ENCODE measurements at regions of chr9 and their contacts with region 1.

Region 1: GRCh38 chr9:35675732-35676392 is 2.1 kb downstream of the CA9 start:
- DNase-seq: no peak
- H3K4me3 ChIP-seq: peak overlapping the region; percentile 39
- CTCF ChIP-seq: no peak

Region 2: DNA sequence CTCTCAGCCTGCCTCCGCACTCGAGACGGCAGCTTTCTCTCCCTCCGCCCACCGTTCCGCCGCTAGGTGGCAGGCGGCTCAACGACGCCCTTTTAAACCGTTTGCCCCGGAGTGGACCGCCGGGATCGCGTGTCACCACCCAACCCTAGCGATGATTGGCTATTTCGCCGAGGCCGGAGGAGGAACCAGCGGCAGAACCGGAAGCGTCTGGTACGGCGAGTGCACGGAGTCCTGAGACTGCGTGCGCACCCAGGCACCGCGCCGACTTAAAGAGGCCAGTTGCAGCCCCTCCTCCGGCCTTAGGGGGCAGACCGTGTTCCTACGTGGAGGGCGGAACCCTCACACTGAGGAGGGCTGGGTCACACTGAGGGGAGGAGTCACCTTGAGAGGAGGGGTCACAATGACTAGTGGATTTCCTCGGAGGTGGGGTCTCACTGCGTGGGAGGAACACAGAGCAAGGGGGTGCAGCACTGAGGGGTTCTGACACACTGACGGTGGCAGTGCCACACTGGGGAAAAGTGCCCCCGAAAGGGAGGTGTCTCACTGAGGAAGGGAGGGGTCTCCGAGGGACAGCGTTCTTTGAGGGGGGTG is 71.8 kb before region 1 on chr9:
- in situ Hi-C with region 1: loop called (anchors 10 kb)
- DNase-seq: peak; percentile 99
- H3K4me3 ChIP-seq: peak overlapping the region; percentile 64
- CTCF ChIP-seq: peak; percentile 94

Region 3: GRCh38 chr9:35711501-35712428 is 35.9 kb after region 1 on chr9:
- in situ Hi-C with region 1: loop called (anchors 5 kb)
- DNase-seq: no peak
- H3K4me3 ChIP-seq: no peak overlapping the region
- CTCF ChIP-seq: no peak